Panc1 (cell line): ENCODE measurements at regions of chr11 and their contacts with region 1.

Region 1: GRCh38 chr11:2532704-2533586 is 88.1 kb downstream of the KCNQ1 start:
- DNase-seq: peak; percentile 84
- ATAC-seq: peak; percentile 85
- H3K4me3 ChIP-seq: peak overlapping the region in 1 of 2 experiments; percentile 30; a peak in 1 of 4 replicates
- H3K27ac ChIP-seq: no peak overlapping the region
- H3K4me1 ChIP-seq: peaks cover 15% of the 10 kb centered on the region
- H3K27me3 ChIP-seq: no peaks in the 10 kb centered on the region
- CTCF ChIP-seq: peak; percentile 100

Region 2: GRCh38 chr11:2428322-2428795 is 104.6 kb before region 1 on chr11:
- CTCF ChIA-PET with region 1: interaction called, 15 read pairs
- POLR2A ChIA-PET with region 1: no interaction called
- in situ Hi-C with region 1: no loop called
- intact Hi-C with region 1: loop called (anchors 1 kb)
- DNase-seq: peak; percentile 17
- ATAC-seq: peak; percentile 88
- H3K4me3 ChIP-seq: no peak overlapping the region
- H3K27ac ChIP-seq: no peak overlapping the region
- H3K4me1 ChIP-seq: no peaks in the 10 kb centered on the region
- H3K27me3 ChIP-seq: no peaks in the 10 kb centered on the region
- CTCF ChIP-seq: peak; percentile 99

Region 3: DNA sequence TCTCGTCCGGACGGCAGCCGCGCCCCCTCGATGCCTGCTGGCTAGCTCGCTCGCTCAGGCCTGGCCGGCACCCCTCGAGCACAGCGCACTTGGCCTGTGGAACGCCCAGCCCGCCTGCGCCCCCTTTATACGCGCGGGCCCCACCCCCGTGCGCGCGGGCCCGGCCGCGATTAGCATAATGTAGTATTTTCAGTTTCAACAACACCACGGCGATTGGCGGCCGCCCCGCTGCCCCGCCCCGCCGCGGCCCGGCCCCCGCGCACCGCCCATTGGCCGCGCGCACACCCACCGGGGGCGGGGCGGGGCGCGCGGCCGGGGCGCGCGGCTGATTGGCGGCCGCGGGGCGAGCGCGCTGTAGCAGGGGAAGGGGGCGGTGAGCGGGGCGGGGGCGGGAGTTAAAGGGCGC is 352.7 kb after region 1 on chr11 and contains the start of gene CDKN1C:
- CTCF ChIA-PET with region 1: interaction called, 132 read pairs
- POLR2A ChIA-PET with region 1: no interaction called
- in situ Hi-C with region 1: no loop called
- intact Hi-C with region 1: loop called (anchors 1 kb)
- DNase-seq: no peak
- ATAC-seq: peak; percentile 70
- H3K4me3 ChIP-seq: peak within 1 kb of the TSS; percentile 56 to 64
- H3K27ac ChIP-seq: no peak within 1 kb of the TSS
- H3K4me1 ChIP-seq: peaks cover 6% of the 10 kb centered on the region; the same call in 1 of the 2 replicates
- H3K27me3 ChIP-seq: no peaks in the 10 kb centered on the region
- CTCF ChIP-seq: no peak
- total RNA-seq, gene CDKN1C: 4.6 TPM

Region 4: GRCh38 chr11:2892215-2893020 is 359.5 kb after region 1 on chr11:
- CTCF ChIA-PET with region 1: interaction called, 132 read pairs
- POLR2A ChIA-PET with region 1: no interaction called
- in situ Hi-C with region 1: no loop called
- intact Hi-C with region 1: loop called (anchors 1 kb)
- DNase-seq: no peak
- ATAC-seq: peak; percentile 69
- H3K4me3 ChIP-seq: peak overlapping the region; percentile 37 to 54
- H3K27ac ChIP-seq: peak overlapping the region; percentile 83
- H3K4me1 ChIP-seq: peaks cover 20% of the 10 kb centered on the region
- H3K27me3 ChIP-seq: no peaks in the 10 kb centered on the region
- CTCF ChIP-seq: peak; percentile 100